A673 (cell line): ENCODE measurements at regions of chr9 and their contacts with region 1.

Region 1: GRCh38 chr9:71643330-71643729 is 125.0 kb downstream of the CEMIP2 start:
- DNase-seq: no peak
- H3K4me3 ChIP-seq: no peak overlapping the region
- H3K27ac ChIP-seq: no peak overlapping the region
- H3K4me1 ChIP-seq: peaks cover 22% of the 10 kb centered on the region
- H3K27me3 ChIP-seq: no peaks in the 10 kb centered on the region
- CTCF ChIP-seq: no peak

Region 2: GRCh38 chr9:71490810-71491209 is 152.5 kb before region 1 on chr9:
- CTCF ChIA-PET with region 1: interaction called, 14 read pairs
- POLR2A ChIA-PET with region 1: no interaction called
- intact Hi-C with region 1: no loop called
- DNase-seq: peak; percentile 7
- H3K4me3 ChIP-seq: no peak overlapping the region
- H3K27ac ChIP-seq: no peak overlapping the region
- H3K4me1 ChIP-seq: no peaks in the 10 kb centered on the region
- H3K27me3 ChIP-seq: peaks cover 63% of the 10 kb centered on the region
- CTCF ChIP-seq: peak; percentile 46